Naive thymus-derived CD4-positive, alpha-beta T cell (primary cell): ENCODE measurements at regions of chr14 and their contacts with region 1.

Region 1: DNA sequence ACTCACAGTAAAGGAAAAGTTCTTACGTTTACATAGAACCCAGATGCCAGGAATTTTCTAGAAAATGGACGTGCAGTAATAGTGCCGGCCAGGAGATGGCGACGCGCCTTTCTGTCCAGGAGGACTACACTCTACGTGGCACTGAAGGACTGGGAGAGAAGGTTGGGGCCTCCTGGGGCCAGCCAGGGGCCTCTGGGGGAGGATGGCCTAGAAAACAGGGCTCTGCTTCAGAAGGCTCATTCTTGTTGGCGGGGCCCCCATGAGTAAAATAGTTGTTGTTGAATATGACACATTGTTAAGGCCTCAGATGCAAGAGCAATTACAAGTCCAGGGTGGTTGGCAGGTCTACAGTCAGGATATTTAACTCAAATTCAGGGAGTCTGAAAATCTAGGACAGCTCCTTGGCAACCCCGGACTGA is 120.1 kb upstream of the MAX start:
- DNase-seq: peak in 8 of 9 donors; percentile 19 to 57 (median 44)
- ATAC-seq: peak; percentile 84
- H3K4me3 ChIP-seq: no peak overlapping the region
- H3K4me3 Mint-ChIP-seq: peak overlapping the region in 5 of 10 donors; percentile 11 to 56 (median 25)
- H3K27ac ChIP-seq: no peak overlapping the region
- H3K27ac Mint-ChIP-seq: peak overlapping the region in 3 of 9 donors; percentile 43 to 83 (median 67)
- H3K4me1 ChIP-seq: peaks cover 4 to 18% of the 10 kb centered on the region in 2 donors
- H3K4me1 Mint-ChIP-seq: peaks cover 11 to 55% (median 44%) of the 10 kb centered on the region in 7 donors
- H3K27me3 ChIP-seq: no peaks in the 10 kb centered on the region
- H3K27me3 Mint-ChIP-seq: no peaks in the 10 kb centered on the region

Region 2: GRCh38 chr14:64891839-64892375 is 330.5 kb before region 1 on chr14:
- CTCF ChIA-PET with region 1: no interaction called
- POLR2A ChIA-PET with region 1: no interaction called
- intact Hi-C with region 1: no loop called
- DNase-seq: peak in 7 of 9 donors; percentile 41 to 68 (median 61)
- ATAC-seq: peak; percentile 90
- H3K4me3 ChIP-seq: no peak overlapping the region
- H3K4me3 Mint-ChIP-seq: no peak overlapping the region
- H3K27ac ChIP-seq: no peak overlapping the region
- H3K27ac Mint-ChIP-seq: no peak overlapping the region
- H3K4me1 ChIP-seq: no peaks in the 10 kb centered on the region
- H3K4me1 Mint-ChIP-seq: peaks cover 0 to 3% (median 0%) of the 10 kb centered on the region in 7 donors
- H3K27me3 ChIP-seq: no peaks in the 10 kb centered on the region
- H3K27me3 Mint-ChIP-seq: peaks cover 0 to 39% (median 9%) of the 10 kb centered on the region in 5 donors

Region 3: GRCh38 chr14:65206448-65207096 is 15.9 kb before region 1 on chr14:
- CTCF ChIA-PET with region 1: interaction called, 4 read pairs
- POLR2A ChIA-PET with region 1: no interaction called
- intact Hi-C with region 1: loop called in 1 of 2 experiments (anchors 2 kb)
- DNase-seq: peak in 1 of 9 donors; percentile 36
- ATAC-seq: peak; percentile 73
- H3K4me3 ChIP-seq: no peak overlapping the region
- H3K4me3 Mint-ChIP-seq: peak overlapping the region in 9 of 10 donors; percentile 41 to 85 (median 70)
- H3K27ac ChIP-seq: peak overlapping the region; percentile 14
- H3K27ac Mint-ChIP-seq: peak overlapping the region; percentile 81 to 93 (median 83)
- H3K4me1 ChIP-seq: peaks cover 40 to 45% of the 10 kb centered on the region in 2 donors
- H3K4me1 Mint-ChIP-seq: peaks cover 35 to 69% (median 58%) of the 10 kb centered on the region in 7 donors
- H3K27me3 ChIP-seq: no peaks in the 10 kb centered on the region
- H3K27me3 Mint-ChIP-seq: no peaks in the 10 kb centered on the region

Region 4: DNA sequence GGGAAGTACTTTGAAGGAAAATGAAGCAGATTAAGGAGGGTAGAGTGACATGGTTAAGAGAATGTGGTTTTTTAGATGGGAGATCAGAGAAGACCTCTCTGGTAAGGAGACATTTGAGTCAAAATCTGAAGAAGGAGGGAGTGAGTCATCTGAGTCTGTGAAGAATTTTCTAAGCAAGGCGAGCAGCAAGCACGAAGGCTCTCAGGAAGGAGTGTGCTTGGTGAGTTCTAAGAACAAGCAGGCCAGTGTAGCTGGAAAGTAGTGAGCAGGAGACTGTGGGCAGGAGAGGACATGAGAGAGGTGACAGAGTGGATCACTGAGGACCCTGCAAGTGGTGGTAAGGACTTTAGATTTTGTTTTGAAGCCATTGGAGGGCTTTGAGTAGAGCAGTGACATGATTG is 113.7 kb after region 1 on chr14:
- CTCF ChIA-PET with region 1: no interaction called
- POLR2A ChIA-PET with region 1: interaction called, 3 read pairs
- intact Hi-C with region 1: loop called in 1 of 2 experiments (anchors 5 kb)
- DNase-seq: peak in 2 of 9 donors; percentile 10 to 60
- ATAC-seq: peak; percentile 37
- H3K4me3 ChIP-seq: no peak overlapping the region
- H3K4me3 Mint-ChIP-seq: peak overlapping the region in 6 of 10 donors; percentile 2 to 83 (median 4)
- H3K27ac ChIP-seq: no peak overlapping the region
- H3K27ac Mint-ChIP-seq: peak overlapping the region; percentile 16 to 91 (median 64)
- H3K4me1 ChIP-seq: peaks cover 0 to 16% of the 10 kb centered on the region in 2 donors
- H3K4me1 Mint-ChIP-seq: peaks cover 21 to 60% (median 42%) of the 10 kb centered on the region in 7 donors
- H3K27me3 ChIP-seq: no peaks in the 10 kb centered on the region
- H3K27me3 Mint-ChIP-seq: no peaks in the 10 kb centered on the region

Region 5: GRCh38 chr14:65356327-65356852 is 133.9 kb after region 1 on chr14:
- CTCF ChIA-PET with region 1: interaction called, 3 read pairs
- POLR2A ChIA-PET with region 1: no interaction called
- intact Hi-C with region 1: loop called (anchors 5 to 10 kb)
- DNase-seq: peak in 3 of 9 donors; percentile 4 to 48 (median 16)
- ATAC-seq: peak; percentile 38
- H3K4me3 ChIP-seq: no peak overlapping the region
- H3K4me3 Mint-ChIP-seq: peak overlapping the region in 2 of 10 donors; percentile 21 to 52
- H3K27ac ChIP-seq: no peak overlapping the region
- H3K27ac Mint-ChIP-seq: peak overlapping the region in 6 of 9 donors; percentile 31 to 82 (median 62)
- H3K4me1 ChIP-seq: peaks cover 5 to 13% of the 10 kb centered on the region in 2 donors
- H3K4me1 Mint-ChIP-seq: peaks cover 6 to 73% (median 16%) of the 10 kb centered on the region in 7 donors
- H3K27me3 ChIP-seq: no peaks in the 10 kb centered on the region
- H3K27me3 Mint-ChIP-seq: no peaks in the 10 kb centered on the region

Region 6: GRCh38 chr14:65392296-65392695 is 169.8 kb after region 1 on chr14:
- CTCF ChIA-PET with region 1: no interaction called
- POLR2A ChIA-PET with region 1: no interaction called
- intact Hi-C with region 1: no loop called
- DNase-seq: no peak
- ATAC-seq: no peak
- H3K4me3 ChIP-seq: no peak overlapping the region
- H3K4me3 Mint-ChIP-seq: no peak overlapping the region
- H3K27ac ChIP-seq: no peak overlapping the region
- H3K27ac Mint-ChIP-seq: peak overlapping the region in 1 of 9 donors; percentile 37
- H3K4me1 ChIP-seq: no peaks in the 10 kb centered on the region
- H3K4me1 Mint-ChIP-seq: peaks cover 0 to 26% (median 0%) of the 10 kb centered on the region in 7 donors
- H3K27me3 ChIP-seq: no peaks in the 10 kb centered on the region
- H3K27me3 Mint-ChIP-seq: no peaks in the 10 kb centered on the region

Region 7: DNA sequence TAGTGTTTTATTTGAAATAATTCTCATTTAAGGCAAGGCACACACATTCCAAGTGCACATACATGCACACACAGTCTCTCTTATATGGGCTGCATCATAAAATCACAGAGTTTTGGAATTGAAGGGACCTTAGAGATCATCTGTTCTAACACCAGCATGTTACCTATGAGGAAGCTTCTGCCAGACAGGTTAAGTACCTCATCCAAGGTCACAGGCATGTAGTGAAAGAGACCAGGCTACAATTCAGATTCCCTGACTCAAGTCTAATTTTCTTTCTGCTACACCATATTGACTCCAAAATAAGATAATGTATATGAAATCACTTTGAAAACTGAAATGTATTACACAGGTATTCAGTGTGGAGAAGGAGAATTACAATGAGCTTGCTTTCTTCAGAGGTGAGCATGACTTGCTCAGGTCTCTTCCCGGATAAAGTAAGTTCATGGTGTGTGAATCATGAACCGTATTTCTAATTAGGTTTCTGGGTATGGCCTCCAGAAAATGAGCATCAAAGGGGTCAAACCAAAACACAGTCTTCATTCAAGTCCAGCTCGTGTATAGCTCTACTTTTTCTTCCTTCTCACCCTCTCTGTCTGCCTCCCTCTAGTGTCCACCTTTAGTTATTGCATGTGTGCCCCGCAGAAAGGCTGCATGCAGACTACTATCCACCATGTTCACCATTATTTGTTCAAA is 602.0 kb after region 1 on chr14:
- CTCF ChIA-PET with region 1: interaction called, 3 read pairs
- POLR2A ChIA-PET with region 1: no interaction called
- intact Hi-C with region 1: loop called in 1 of 2 experiments (anchors 1 kb)
- DNase-seq: peak in 8 of 9 donors; percentile 38 to 71 (median 60)
- ATAC-seq: peak; percentile 93
- H3K4me3 ChIP-seq: no peak overlapping the region
- H3K4me3 Mint-ChIP-seq: peak overlapping the region in 1 of 10 donors; percentile 39
- H3K27ac ChIP-seq: no peak overlapping the region
- H3K27ac Mint-ChIP-seq: peak overlapping the region in 3 of 9 donors; percentile 0 to 66 (median 66)
- H3K4me1 ChIP-seq: peaks cover 6 to 8% of the 10 kb centered on the region in 2 donors
- H3K4me1 Mint-ChIP-seq: peaks cover 3 to 33% (median 14%) of the 10 kb centered on the region in 7 donors
- H3K27me3 ChIP-seq: no peaks in the 10 kb centered on the region
- H3K27me3 Mint-ChIP-seq: peaks cover 0 to 7% (median 0%) of the 10 kb centered on the region in 5 donors

Region 8: DNA sequence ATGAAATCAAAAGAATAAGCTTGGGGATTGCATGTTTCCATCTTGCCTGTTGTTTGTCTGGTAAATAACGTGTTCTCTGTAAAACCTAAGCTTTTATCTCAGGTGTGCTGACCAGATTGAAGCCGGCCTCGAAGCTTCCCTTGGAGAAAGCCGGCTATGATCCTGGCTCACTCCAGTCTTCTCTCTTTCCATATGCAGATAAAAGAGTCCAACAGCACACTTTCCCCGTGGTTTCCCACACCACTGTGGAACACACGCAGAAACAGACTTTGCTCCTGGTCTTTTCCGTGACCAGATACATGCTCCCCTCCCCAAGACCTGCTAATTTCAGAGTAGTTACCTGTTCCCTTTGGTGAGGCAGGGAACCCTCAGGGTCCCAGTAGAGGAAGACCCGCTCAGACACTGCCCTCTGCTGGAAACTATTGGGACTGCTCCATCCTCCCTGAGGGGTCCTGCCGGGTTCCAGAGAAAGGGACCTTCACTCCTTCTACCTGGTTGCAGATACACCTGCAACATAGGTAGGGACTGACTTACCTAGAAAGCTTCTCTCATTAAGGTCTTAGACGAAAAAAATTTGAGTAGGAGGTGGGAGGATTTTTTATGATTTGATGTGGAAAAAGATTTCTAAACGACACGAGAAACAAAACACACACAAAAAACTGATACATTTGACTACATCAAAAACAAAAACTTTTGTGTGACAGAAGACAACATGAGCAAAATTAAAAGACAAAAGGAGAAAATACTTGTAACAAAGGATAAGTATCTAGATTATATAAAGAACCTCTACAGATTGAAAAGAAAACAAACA is 848.3 kb after region 1 on chr14:
- CTCF ChIA-PET with region 1: interaction called, 8 read pairs
- POLR2A ChIA-PET with region 1: no interaction called
- intact Hi-C with region 1: loop called (anchors 1 kb)
- DNase-seq: peak; percentile 41 to 76 (median 62)
- ATAC-seq: peak; percentile 91
- H3K4me3 ChIP-seq: no peak overlapping the region
- H3K4me3 Mint-ChIP-seq: no peak overlapping the region
- H3K27ac ChIP-seq: no peak overlapping the region
- H3K27ac Mint-ChIP-seq: peak overlapping the region in 1 of 9 donors; percentile 28
- H3K4me1 ChIP-seq: no peaks in the 10 kb centered on the region
- H3K4me1 Mint-ChIP-seq: peaks cover 4 to 12% (median 8%) of the 10 kb centered on the region in 7 donors
- H3K27me3 ChIP-seq: no peaks in the 10 kb centered on the region
- H3K27me3 Mint-ChIP-seq: peaks cover 0 to 20% (median 6%) of the 10 kb centered on the region in 5 donors